HepG2 (cell line): ENCODE measurements at regions of chr1 and their contacts with region 1.

Region 1: GRCh38 chr1:155084722-155085503 is 6.3 kb downstream of the EFNA3 start:
- DNase-seq: peak; percentile 82
- ATAC-seq: peak; percentile 82
- H3K4me3 ChIP-seq: peak overlapping the region; percentile 72 to 89 (median 75)
- H3K27ac ChIP-seq: peak overlapping the region; percentile 74
- H3K4me1 ChIP-seq: peaks cover 83% of the 10 kb centered on the region
- H3K27me3 ChIP-seq: peaks cover 22 to 44% of the 10 kb centered on the region in 2 experiments
- CTCF ChIP-seq: peak; percentile 99
- EP300 ChIP-seq: no peak
- POLR2A ChIP-seq: no peak
- RAD21 ChIP-seq: peak; percentile 94

Region 2: GRCh38 chr1:155044812-155045690 is 39.9 kb before region 1 on chr1:
- CTCF ChIA-PET with region 1: interaction called, 12 read pairs
- POLR2A ChIA-PET with region 1: interaction called, 3 read pairs
- in situ Hi-C with region 1: no loop called
- intact Hi-C with region 1: loop called (anchors 5 kb)
- DNase-seq: peak; percentile 79
- ATAC-seq: peak; percentile 85
- H3K4me3 ChIP-seq: peak overlapping the region in 1 of 3 experiments; percentile 8; a peak in 1 of 6 replicates
- H3K27ac ChIP-seq: no peak overlapping the region
- H3K4me1 ChIP-seq: peaks cover 69% of the 10 kb centered on the region
- H3K27me3 ChIP-seq: peaks cover 7 to 21% of the 10 kb centered on the region in 2 experiments
- CTCF ChIP-seq: peak; percentile 89
- EP300 ChIP-seq: no peak
- POLR2A ChIP-seq: no peak
- RAD21 ChIP-seq: peak; percentile 81